BJ (cell line): ENCODE measurements at regions of chr6 and their contacts with region 1.

Region 1: GRCh38 chr6:56650191-56650590 is 7.5 kb upstream of the DST start:
- DNase-seq: no peak
- H3K4me3 ChIP-seq: no peak overlapping the region
- H3K27me3 ChIP-seq: no peaks in the 10 kb centered on the region
- CTCF ChIP-seq: no peak

Region 2: DNA sequence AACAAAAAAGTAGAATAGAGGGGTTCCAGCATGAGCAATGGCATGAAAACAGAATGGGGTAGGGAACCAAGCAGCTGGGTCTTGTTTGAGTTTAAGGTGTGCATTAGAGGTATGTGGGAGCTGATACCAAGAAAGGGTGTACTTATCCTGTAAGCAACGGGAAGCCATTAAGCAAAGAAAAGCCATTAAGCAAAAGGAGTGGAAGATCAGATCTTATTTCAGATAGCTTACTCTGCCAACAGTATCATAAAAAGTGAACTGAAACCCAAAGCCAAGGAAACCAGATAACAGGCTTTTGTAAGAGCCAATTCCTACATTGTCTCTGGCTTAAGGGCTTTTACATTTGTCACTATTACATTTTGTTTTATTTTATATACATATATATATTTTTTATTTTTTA is 283.5 kb after region 1 on chr6:
- CTCF ChIA-PET with region 1: no interaction called
- POLR2A ChIA-PET with region 1: interaction called, 15 read pairs
- DNase-seq: no peak
- H3K4me3 ChIP-seq: no peak overlapping the region
- H3K27me3 ChIP-seq: no peaks in the 10 kb centered on the region
- CTCF ChIP-seq: no peak